Heart right ventricle (tissue), 16 donors: ENCODE measurements at regions of chr12 and their contacts with region 1.

Region 1: DNA sequence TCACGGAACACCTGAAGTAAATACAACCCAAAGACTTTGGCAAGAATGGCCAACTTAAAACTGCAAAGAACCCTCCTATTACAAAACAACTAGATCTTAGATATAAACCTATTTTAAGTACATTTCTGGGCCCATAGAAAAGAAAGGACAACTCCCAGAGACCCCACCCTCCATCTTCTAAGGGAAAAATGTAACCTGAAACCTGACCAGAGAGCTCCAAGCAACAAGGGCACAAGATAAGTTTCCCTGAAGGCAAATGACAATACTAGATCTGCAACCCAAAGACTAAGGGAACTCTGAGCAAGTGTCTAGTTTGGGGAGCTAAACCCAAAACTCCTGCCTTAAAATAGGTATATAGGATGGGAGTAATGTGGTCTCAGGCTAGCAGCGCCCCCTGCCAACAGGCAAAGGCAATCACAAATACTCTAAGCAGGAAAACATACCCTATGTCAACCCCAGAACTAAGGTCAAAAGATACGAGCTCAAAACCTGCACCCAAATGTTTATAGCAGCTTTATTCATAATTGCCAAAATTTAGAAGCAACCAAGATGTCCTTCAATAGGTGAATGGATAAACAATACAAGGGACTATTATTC is 218.9 kb downstream of the ITPR2 start:
- DNase-seq: peak; percentile 14 to 25
- ATAC-seq: peak in 4 of 8 donors; percentile 56 to 72 (median 62)
- H3K4me3 ChIP-seq: no peak overlapping the region
- H3K27ac ChIP-seq: no peak overlapping the region
- H3K4me1 ChIP-seq: peaks cover 0 to 4% (median 0%) of the 10 kb centered on the region in 9 donors
- H3K27me3 ChIP-seq: no peaks in the 10 kb centered on the region
- CTCF ChIP-seq: peak in 8 of 9 donors; percentile 31 to 72 (median 58)

Region 2: GRCh38 chr12:26097046-26097878 is 516.9 kb before region 1 on chr12:
- intact Hi-C with region 1: loop called in 2 of 10 experiments (anchors 5 to 10 kb)
- DNase-seq: peak; percentile 59 to 78
- ATAC-seq: peak; percentile 89 to 98 (median 94)
- H3K4me3 ChIP-seq: no peak overlapping the region
- H3K27ac ChIP-seq: no peak overlapping the region
- H3K4me1 ChIP-seq: peaks cover 0 to 7% (median 0%) of the 10 kb centered on the region in 9 donors
- H3K27me3 ChIP-seq: no peaks in the 10 kb centered on the region
- CTCF ChIP-seq: peak; percentile 85 to 97 (median 95)

Region 3: GRCh38 chr12:26113853-26114719 is 500.0 kb before region 1 on chr12:
- intact Hi-C with region 1: loop called in 2 of 10 experiments (anchors 10 kb)
- DNase-seq: peak; percentile 94 to 96
- ATAC-seq: peak; percentile 90 to 98 (median 93)
- H3K4me3 ChIP-seq: peak overlapping the region; percentile 0 to 59 (median 52)
- H3K27ac ChIP-seq: peak overlapping the region; percentile 79 to 96 (median 93)
- H3K4me1 ChIP-seq: peaks cover 3 to 54% (median 25%) of the 10 kb centered on the region in 9 donors
- H3K27me3 ChIP-seq: peaks cover 0 to 9% (median 0%) of the 10 kb centered on the region in 7 donors
- CTCF ChIP-seq: peak in 6 of 9 donors; percentile 5 to 42 (median 28)

Region 4: GRCh38 chr12:26434299-26435068 is 179.6 kb before region 1 on chr12:
- intact Hi-C with region 1: loop called in 6 of 10 experiments (anchors 5 to 10 kb)
- DNase-seq: no peak
- ATAC-seq: peak in 5 of 8 donors; percentile 55 to 70 (median 56)
- H3K4me3 ChIP-seq: no peak overlapping the region
- H3K27ac ChIP-seq: no peak overlapping the region
- H3K4me1 ChIP-seq: no peaks in the 10 kb centered on the region
- H3K27me3 ChIP-seq: no peaks in the 10 kb centered on the region
- CTCF ChIP-seq: peak; percentile 16 to 75 (median 69)

Region 5: GRCh38 chr12:26443309-26443708 is 170.8 kb before region 1 on chr12:
- intact Hi-C with region 1: loop called in 7 of 10 experiments (anchors 5 to 10 kb)
- DNase-seq: no peak
- ATAC-seq: no peak
- H3K4me3 ChIP-seq: no peak overlapping the region
- H3K27ac ChIP-seq: no peak overlapping the region
- H3K4me1 ChIP-seq: no peaks in the 10 kb centered on the region
- H3K27me3 ChIP-seq: no peaks in the 10 kb centered on the region
- CTCF ChIP-seq: no peak

Region 6: DNA sequence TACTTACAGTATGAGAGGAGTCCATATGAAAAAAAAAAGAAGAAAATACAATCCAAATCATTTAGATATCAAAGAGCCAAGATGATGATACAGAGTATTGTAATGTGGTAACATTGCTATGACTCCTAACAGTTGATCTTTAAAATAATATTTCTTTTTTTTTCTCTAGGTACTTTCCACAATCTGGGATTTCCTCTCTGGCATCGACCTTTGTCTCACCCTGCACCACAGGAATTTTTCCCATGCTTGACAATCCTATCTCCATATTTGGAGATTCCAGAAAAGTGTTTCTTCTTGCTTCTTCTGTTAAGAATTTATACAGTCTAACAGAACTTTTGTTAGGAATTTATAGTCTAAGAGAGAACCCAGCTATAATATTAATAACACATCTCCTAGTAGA is 34.5 kb after region 1 on chr12:
- intact Hi-C with region 1: no loop called
- DNase-seq: no peak
- ATAC-seq: peak in 3 of 8 donors; percentile 38 to 51 (median 49)
- H3K4me3 ChIP-seq: no peak overlapping the region
- H3K27ac ChIP-seq: no peak overlapping the region
- H3K4me1 ChIP-seq: peaks cover 0 to 18% (median 0%) of the 10 kb centered on the region in 9 donors
- H3K27me3 ChIP-seq: no peaks in the 10 kb centered on the region
- CTCF ChIP-seq: no peak